ENCODE measurements at regions of chr1 and their contacts with region 1.

Region 1: GRCh38 chr1:150661156-150661555 is 31.7 kb upstream of the ENSA start:
- DNase-seq: peak; percentile 90
- H3K4me3 ChIP-seq: no peak overlapping the region
- H3K27ac ChIP-seq: peak overlapping the region; percentile 73
- H3K4me1 ChIP-seq: peaks cover 14% of the 10 kb centered on the region
- H3K27me3 ChIP-seq: no peaks in the 10 kb centered on the region
- CTCF ChIP-seq: no peak

Region 2: GRCh38 chr1:150696590-150697524 is 35.7 kb after region 1 on chr1 and contains the start of gene GOLPH3L:
- CTCF ChIA-PET with region 1: no interaction called
- dilution Hi-C with region 1: no loop called
- in situ Hi-C with region 1: no loop called
- intact Hi-C with region 1: loop called (anchors 1 kb)
- DNase-seq: peak; percentile 100
- H3K4me3 ChIP-seq: peak within 1 kb of the TSS; percentile 59 to 90 (median 60)
- H3K27ac ChIP-seq: peak within 1 kb of the TSS; percentile 65
- H3K4me1 ChIP-seq: peaks cover 8% of the 10 kb centered on the region
- H3K27me3 ChIP-seq: no peaks in the 10 kb centered on the region
- CTCF ChIP-seq: peak in 1 of 2 donors; percentile 31
- total RNA-seq, gene GOLPH3L: 11.7 to 22.4 TPM